ENCODE measurements at regions of chr18 and their contacts with region 1.

Region 1: DNA sequence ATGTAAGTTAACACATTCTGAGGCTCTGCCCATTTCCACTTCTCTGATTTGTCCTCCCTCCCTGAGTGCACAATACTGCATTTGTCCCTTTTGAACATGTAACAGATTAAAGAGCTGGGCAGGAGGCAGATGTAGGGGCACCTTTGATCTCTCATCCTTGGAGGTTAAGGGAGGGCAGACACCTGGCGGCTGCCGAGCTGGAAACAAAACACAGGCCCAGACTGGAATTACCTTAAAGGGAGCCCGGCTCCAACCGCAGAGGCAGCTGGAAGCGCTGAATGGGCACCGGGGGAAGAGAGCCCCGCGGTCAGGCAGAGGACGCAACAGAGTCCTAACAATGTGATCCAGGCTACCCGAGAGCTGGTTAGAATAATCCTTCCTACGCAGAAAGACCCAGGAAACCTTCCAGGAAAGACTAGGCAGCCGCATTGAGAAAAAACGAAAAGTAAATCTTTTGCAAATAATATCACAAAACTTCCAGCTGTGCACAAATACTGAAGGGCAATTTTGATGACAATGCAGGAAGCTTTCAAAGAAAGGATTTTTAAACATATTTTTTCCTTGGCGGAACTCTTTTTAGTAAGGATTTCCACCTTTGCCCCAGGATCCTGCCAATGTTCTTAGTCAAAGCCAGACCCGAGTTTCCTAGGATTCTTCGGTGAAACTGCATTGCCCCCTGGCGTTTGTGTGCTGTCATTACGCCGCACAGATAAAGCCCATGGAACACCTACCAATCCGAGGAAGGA is 216.0 kb downstream of the TGIF1 start:
- DNase-seq: peak; percentile 76
- ATAC-seq: peak; percentile 87
- H3K4me3 Mint-ChIP-seq: no peak overlapping the region
- H3K27ac Mint-ChIP-seq: no peak overlapping the region
- H3K4me1 Mint-ChIP-seq: peaks cover 20% of the 10 kb centered on the region
- H3K27me3 Mint-ChIP-seq: no peaks in the 10 kb centered on the region
- CTCF ChIP-seq: peak; percentile 99

Region 2: GRCh38 chr18:3269241-3269913 is 396.6 kb before region 1 on chr18:
- CTCF ChIA-PET with region 1: interaction called, 17 read pairs
- POLR2A ChIA-PET with region 1: no interaction called
- intact Hi-C with region 1: no loop called
- DNase-seq: no peak
- ATAC-seq: no peak
- H3K4me3 Mint-ChIP-seq: peak overlapping the region; percentile 6
- H3K27ac Mint-ChIP-seq: peak overlapping the region; percentile 77
- H3K4me1 Mint-ChIP-seq: peaks cover 82% of the 10 kb centered on the region
- H3K27me3 Mint-ChIP-seq: no peaks in the 10 kb centered on the region
- CTCF ChIP-seq: no peak

Region 3: GRCh38 chr18:3380384-3380961 is 285.5 kb before region 1 on chr18:
- CTCF ChIA-PET with region 1: interaction called, 12 read pairs
- POLR2A ChIA-PET with region 1: no interaction called
- intact Hi-C with region 1: no loop called
- DNase-seq: peak; percentile 7
- ATAC-seq: peak; percentile 90
- H3K4me3 Mint-ChIP-seq: no peak overlapping the region
- H3K27ac Mint-ChIP-seq: no peak overlapping the region
- H3K4me1 Mint-ChIP-seq: peaks cover 3% of the 10 kb centered on the region
- H3K27me3 Mint-ChIP-seq: peaks cover 5% of the 10 kb centered on the region
- CTCF ChIP-seq: no peak

Region 4: DNA sequence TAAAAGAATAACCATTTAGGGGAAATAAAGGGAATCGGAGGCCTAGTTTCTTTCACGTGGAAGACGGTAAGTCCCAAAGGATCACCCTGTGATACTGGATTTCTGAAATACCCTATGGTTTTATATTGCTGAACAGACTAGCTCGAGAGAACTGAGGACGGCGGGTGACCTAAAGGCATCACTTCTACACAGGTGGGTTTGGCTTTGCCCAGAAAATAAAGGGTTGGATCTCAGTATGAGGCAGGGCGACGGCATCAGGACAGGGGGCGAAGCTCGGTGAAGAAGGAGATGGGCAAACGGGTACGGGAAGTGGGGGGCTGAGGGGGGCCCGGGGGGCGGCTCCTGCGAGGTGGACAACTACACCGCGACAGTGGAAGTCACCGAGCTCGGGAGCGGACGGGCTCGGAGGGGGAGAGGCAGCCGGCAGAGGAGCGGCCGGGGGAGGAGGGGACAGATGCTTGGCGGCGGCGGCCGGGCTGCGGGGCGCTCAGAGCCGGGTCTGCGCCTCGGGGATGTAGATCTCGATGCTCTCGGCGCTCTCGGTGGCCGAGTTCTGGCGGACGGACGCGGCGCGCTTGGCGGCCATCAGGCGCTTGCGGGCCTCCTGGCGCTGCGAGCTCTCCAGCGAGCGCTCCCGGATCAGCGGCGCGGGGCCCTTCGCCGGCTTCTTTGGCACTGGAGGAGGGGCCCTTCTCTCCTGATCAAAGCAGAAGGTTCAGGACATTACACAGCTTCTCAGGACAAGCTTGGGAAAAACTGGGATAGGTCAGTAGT is 167.1 kb before region 1 on chr18:
- CTCF ChIA-PET with region 1: interaction called, 15 read pairs
- POLR2A ChIA-PET with region 1: no interaction called
- intact Hi-C with region 1: no loop called
- DNase-seq: peak; percentile 24
- ATAC-seq: peak; percentile 53
- H3K4me3 Mint-ChIP-seq: peak overlapping the region; percentile 49
- H3K27ac Mint-ChIP-seq: no peak overlapping the region
- H3K4me1 Mint-ChIP-seq: peaks cover 15% of the 10 kb centered on the region
- H3K27me3 Mint-ChIP-seq: peaks cover 33% of the 10 kb centered on the region
- CTCF ChIP-seq: no peak

Region 5: DNA sequence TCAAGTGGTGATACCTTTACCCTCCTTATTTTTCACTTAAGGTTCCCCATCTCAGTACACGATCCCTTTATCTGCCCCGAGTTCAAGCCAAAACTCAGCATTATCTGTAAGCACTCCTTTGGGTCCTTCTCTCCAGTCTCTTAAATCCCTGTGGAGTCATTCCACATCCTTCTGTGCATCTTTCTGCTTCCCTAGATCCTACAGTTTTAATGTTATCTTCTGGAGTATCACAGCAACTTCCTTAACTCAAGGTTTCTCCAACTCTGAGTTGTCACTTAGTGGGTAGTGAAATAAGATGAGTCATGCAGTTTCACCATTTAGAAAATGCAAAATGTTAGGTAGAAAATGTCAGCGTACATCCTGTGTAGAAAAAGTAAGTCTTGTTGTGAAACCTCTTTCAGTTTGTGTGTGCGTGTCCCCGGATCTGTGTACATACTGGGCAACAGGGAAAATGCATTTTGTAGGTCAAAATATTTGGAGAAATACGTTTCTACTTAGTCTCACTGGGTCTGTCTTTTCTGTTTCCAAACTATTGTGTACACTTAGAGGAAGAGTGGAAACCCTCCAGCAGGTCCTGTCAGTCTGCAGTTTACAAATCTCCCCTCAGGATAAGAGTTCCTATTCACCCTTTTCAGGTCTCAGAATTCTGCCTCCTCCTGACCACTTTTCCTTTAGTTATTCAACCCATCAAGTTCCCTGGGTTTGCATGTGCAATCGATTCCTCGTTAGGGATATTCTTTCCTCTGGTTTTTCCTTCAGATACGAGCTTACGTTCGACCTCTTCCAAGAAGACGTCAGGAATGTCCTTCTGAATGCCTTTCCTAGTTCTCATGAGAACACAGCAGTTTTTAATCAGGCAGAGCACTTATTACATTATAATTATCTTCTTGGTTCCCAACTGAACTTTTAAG is 61.2 kb before region 1 on chr18:
- CTCF ChIA-PET with region 1: interaction called, 32 read pairs
- POLR2A ChIA-PET with region 1: interaction called, 3 read pairs
- intact Hi-C with region 1: loop called (anchors 5 kb)
- DNase-seq: peak; percentile 61
- ATAC-seq: peak; percentile 70
- H3K4me3 Mint-ChIP-seq: no peak overlapping the region
- H3K27ac Mint-ChIP-seq: no peak overlapping the region
- H3K4me1 Mint-ChIP-seq: peaks cover 10% of the 10 kb centered on the region
- H3K27me3 Mint-ChIP-seq: no peaks in the 10 kb centered on the region
- CTCF ChIP-seq: no peak

Region 6: GRCh38 chr18:3652380-3653262 is 13.3 kb before region 1 on chr18:
- CTCF ChIA-PET with region 1: interaction called, 13 read pairs
- POLR2A ChIA-PET with region 1: no interaction called
- intact Hi-C with region 1: no loop called
- DNase-seq: peak; percentile 89
- ATAC-seq: peak; percentile 92
- H3K4me3 Mint-ChIP-seq: peak overlapping the region; percentile 13
- H3K27ac Mint-ChIP-seq: peak overlapping the region; percentile 87
- H3K4me1 Mint-ChIP-seq: peaks cover 19% of the 10 kb centered on the region
- H3K27me3 Mint-ChIP-seq: no peaks in the 10 kb centered on the region
- CTCF ChIP-seq: no peak

Region 7: GRCh38 chr18:3782901-3783300 is 116.9 kb after region 1 on chr18:
- CTCF ChIA-PET with region 1: no interaction called
- POLR2A ChIA-PET with region 1: no interaction called
- intact Hi-C with region 1: no loop called
- DNase-seq: no peak
- ATAC-seq: no peak
- H3K4me3 Mint-ChIP-seq: no peak overlapping the region
- H3K27ac Mint-ChIP-seq: no peak overlapping the region
- H3K4me1 Mint-ChIP-seq: no peaks in the 10 kb centered on the region
- H3K27me3 Mint-ChIP-seq: peaks cover 3% of the 10 kb centered on the region
- CTCF ChIP-seq: no peak

Measured in activated CD8-positive, alpha-beta T cell treated with anti-CD3 and anti-CD28 coated beads for 36 hours (primary cell).